Right cardiac atrium (tissue), 5 donors: ENCODE measurements at regions of chr7 and their contacts with region 1.

Region 1: GRCh38 chr7:16062269-16062668 is 359.1 kb downstream of the CRPPA start:
- DNase-seq: no peak
- ATAC-seq: peak; percentile 71 to 75
- H3K4me3 ChIP-seq: no peak overlapping the region
- H3K27ac ChIP-seq: no peak overlapping the region
- H3K4me1 ChIP-seq: no peaks in the 10 kb centered on the region
- H3K27me3 ChIP-seq: no peaks in the 10 kb centered on the region

Region 2: DNA sequence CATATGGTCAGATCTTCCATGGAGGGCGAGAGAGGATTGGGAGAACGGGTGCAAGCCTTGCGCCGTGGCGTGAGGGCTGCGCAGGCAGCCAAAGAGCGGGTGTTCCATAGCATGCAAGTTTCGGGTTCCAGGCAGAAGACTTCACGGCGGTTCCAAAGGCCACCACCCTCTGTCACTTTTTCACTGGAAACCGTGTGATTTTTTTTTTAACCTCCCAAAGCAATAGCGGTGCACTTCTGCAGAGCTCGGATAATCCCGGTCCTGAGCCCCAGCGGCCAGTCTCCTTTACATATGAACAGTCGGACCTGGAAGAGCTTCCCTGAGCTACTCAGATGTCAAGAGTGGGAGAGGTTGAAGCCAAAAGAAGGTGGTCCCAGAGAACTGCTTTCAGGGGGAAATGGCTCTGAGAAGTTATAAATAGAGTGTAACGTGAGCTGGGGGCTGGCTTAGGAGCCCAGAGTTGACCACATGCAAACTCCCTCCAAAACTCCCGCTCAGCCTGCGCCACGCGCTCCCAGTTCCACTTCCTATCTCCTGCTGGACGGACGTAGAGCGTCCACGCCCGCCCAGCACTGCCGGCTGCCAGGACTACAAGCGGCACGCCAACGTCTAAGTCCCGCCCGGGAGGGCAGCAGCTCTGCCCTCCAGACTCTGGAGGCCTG is 375.8 kb before region 1 on chr7 and contains the start of gene MEOX2:
- intact Hi-C with region 1: loop called in 1 of 4 experiments (anchors 10 kb)
- DNase-seq: peak; percentile 85 to 93 (median 93)
- ATAC-seq: peak; percentile 95 to 96
- H3K4me3 ChIP-seq: peak within 1 kb of the TSS; percentile 53
- H3K27ac ChIP-seq: peak within 1 kb of the TSS; percentile 54
- H3K4me1 ChIP-seq: no peaks in the 10 kb centered on the region
- H3K27me3 ChIP-seq: no peaks in the 10 kb centered on the region
- total RNA-seq, gene MEOX2: 3.1 to 8.4 (median 5.8) TPM

Region 3: DNA sequence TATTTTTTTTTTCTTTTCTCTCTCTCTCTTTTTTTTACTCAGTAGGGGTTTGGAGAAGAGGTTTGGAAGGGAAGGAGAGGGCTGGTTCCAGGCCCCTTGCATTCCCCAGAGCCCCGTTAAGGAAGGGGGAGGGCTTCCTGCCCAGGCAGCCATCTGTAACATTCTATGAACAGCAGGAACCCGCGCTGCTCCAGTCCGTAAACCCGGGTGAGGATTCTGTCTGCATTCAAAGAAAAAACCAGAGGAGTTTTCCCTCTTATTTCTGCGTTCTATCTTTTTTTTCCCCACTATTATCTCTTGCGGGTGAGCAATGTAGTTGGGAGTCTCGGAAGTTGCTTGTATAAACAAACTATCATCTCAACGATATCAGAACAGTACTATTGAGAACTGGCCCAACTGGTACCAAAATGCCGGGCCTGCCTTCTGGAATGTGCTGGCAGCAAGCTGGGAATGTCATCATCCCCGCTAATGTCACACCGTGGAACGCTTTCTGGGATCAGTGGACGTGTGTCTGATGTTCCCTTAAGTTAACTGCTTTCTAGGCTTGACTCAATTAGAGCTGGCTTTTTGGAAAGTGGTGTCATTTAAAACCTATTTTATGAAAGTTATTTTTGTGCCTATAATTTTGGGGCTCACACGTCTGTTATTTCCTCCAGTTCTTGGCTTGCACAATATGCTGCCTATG is 222.7 kb before region 1 on chr7:
- intact Hi-C with region 1: loop called in 1 of 4 experiments (anchors 10 kb)
- DNase-seq: peak; percentile 73 to 91 (median 86)
- ATAC-seq: peak; percentile 97 to 98
- H3K4me3 ChIP-seq: peak overlapping the region; percentile 57
- H3K27ac ChIP-seq: peak overlapping the region; percentile 88
- H3K4me1 ChIP-seq: no peaks in the 10 kb centered on the region
- H3K27me3 ChIP-seq: no peaks in the 10 kb centered on the region

Region 4: GRCh38 chr7:15921576-15921975 is 140.7 kb before region 1 on chr7:
- intact Hi-C with region 1: no loop called
- DNase-seq: no peak
- ATAC-seq: no peak
- H3K4me3 ChIP-seq: no peak overlapping the region
- H3K27ac ChIP-seq: no peak overlapping the region
- H3K4me1 ChIP-seq: peaks cover 3% of the 10 kb centered on the region
- H3K27me3 ChIP-seq: no peaks in the 10 kb centered on the region

Region 5: DNA sequence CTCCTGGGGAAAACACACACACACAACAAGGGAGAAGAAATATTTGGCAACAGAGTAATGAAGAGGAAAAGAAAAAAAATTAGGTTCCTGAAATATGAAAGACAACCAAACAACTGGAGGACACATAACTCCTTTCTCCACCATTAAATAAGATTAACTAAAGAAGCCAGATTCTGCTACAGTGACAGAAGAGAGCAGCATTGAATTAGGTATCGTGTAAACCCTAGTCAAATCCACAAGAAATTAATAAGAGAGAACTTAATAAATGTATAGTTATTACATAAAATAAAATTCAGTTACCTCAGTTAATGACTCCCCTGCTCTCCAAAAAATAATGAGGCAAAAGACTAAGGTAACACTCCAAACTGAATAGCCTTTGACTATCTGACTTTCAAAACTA is 52.4 kb after region 1 on chr7:
- intact Hi-C with region 1: no loop called
- DNase-seq: no peak
- ATAC-seq: no peak
- H3K4me3 ChIP-seq: no peak overlapping the region
- H3K27ac ChIP-seq: no peak overlapping the region
- H3K4me1 ChIP-seq: no peaks in the 10 kb centered on the region
- H3K27me3 ChIP-seq: no peaks in the 10 kb centered on the region

Region 6: DNA sequence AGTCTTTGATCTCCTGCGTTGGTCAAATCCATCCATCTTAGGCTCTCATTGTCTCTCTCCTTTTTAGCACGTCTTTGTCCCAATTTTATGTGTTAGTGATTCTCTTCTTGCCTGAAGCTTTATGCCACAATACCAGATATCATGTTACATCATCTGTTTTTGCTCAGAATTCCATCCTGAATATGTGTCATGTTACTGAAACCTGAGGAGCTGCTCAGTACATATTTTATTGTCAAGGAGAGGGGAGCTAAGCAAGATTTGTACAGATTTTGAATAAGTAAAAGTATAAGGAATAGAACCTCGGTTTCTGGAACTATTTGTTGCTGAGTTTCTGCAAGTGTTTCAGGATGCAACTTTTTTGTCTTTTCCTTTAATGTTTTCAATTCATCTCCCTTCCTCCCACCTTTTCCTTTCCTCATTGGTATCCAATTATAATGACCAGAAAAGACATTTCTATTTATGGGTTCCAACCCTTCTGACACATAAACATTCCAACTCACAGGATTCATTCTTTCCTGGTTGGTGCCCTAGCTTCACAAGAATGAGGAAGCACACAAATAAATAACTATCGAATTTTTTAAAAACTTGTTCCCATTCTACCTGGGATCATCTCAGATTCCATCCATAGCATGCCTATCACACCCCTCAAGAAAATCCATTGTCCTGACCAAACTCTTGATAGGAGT is 67.3 kb after region 1 on chr7:
- intact Hi-C with region 1: no loop called
- DNase-seq: no peak
- ATAC-seq: no peak
- H3K4me3 ChIP-seq: no peak overlapping the region
- H3K27ac ChIP-seq: no peak overlapping the region
- H3K4me1 ChIP-seq: peaks cover 5% of the 10 kb centered on the region
- H3K27me3 ChIP-seq: no peaks in the 10 kb centered on the region